Sciatic nerve (tissue), 2 donors: ENCODE measurements at regions of chr7 and their contacts with region 1.

Region 1: DNA sequence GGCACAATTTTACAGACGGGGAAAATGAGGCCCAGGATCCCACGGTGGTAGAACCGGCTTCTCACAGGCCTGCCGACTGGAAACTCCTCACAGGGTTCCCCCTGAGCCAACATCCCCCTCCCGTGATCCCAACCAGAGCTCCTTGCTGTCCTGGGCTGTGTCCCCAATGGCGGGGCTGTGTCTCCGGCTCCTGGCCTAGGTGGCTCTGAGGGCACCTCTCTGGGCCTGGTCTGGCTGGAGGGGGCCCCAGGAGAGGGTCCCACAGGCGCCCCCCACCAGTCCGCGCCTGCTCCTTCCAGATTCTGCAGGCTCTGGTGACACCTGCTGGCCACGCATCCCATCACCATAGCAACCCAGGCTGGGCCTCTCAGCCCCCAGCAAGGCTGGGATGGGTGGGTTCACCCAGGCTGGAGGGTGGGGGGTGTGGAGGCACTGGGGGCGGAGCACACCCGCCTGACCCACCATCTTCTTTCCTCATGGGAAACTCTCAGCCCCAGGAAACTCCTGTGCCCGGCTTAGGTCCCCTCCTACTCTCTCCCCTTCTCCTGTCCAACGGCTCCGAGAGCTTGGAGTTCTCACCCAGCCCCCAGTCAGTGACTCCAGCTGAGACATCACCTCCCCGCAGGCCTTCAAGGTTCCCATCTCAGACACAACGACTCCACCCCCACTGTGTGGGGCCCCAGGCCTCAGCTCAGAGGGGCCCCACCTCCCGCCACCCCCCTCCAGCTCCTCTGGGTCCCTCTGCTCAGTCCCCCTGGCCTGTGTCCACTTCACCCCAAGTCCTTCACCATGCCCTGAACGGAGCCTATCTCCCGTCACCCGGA is 27.1 kb upstream of the TNRC18 start:
- DNase-seq: no peak
- ATAC-seq: peak; percentile 79

Region 2: GRCh38 chr7:5248201-5248885 is 202.4 kb before region 1 on chr7:
- intact Hi-C with region 1: loop called (anchors 10 kb)
- DNase-seq: peak; percentile 83
- ATAC-seq: peak; percentile 93

Region 3: DNA sequence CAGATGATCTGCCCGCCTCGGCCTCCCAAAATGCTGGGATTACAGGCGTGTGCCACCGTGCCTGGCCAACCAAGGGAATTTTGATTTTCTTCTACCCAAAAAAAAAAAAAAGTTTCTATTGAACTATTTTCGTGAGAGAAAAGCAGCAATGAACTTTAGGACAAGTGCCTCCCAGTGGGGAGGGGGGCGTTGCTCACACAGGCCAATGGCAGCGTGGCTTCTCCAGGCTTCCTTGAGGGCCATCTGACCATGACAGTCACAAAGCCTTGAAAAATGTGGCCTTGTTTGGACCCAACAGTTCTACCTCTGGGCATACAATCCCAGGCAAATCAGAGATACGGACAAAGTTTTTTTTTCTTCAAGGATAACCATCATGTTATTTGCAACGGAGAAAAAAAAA is 83.1 kb before region 1 on chr7:
- intact Hi-C with region 1: loop called (anchors 5 kb)
- DNase-seq: no peak
- ATAC-seq: peak; percentile 38

Region 4: DNA sequence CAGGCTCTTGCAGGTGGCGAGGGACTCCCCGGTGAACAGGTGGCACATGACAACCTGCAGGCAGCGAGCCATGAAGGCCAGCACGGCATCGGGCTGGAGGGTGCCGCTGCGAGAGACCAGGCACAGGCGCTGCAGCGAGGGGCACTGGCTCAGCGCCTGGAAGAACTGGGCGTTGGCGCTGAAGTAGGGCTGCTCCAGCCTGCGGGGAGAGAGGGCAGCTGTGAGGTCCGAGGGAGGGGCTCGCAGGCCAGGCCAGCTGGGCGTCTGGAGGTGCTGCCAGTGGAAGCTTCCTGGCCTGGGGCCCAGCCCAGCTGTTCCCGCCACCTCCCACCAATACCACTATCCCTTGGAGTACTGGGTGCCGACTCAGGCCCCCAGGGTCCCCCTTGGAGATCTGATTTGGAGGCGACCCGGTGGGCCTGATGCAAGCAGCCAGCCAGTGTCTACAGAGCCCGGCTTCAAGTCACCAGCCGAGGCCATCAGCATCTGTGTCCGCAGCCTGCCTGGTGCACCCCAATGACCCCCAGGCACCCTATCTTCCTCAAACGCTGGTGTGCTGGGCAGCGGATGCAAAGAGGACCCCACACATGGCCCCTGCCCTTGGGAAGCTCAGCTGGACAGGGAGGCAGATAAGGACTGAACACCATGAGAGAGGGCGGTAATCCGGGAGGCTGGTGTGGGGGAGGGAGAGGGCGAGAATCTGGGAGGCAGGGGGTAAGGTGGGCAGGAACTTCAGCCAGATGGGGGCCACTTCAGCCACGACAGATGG is 40.7 kb after region 1 on chr7:
- intact Hi-C with region 1: no loop called
- DNase-seq: no peak
- ATAC-seq: no peak